Cardiac septum (tissue), 1 donor: ENCODE measurements at regions of chr6 and their contacts with region 1.

Region 1: GRCh38 chr6:25223490-25223991 is 55.6 kb upstream of the CARMIL1 start:
- DNase-seq: no peak

Region 2: GRCh38 chr6:25166955-25167748 is 56.4 kb before region 1 on chr6:
- intact Hi-C with region 1: no loop called
- DNase-seq: no peak

Region 3: GRCh38 chr6:25458485-25458884 is 234.9 kb after region 1 on chr6:
- intact Hi-C with region 1: no loop called
- DNase-seq: no peak

Region 4: GRCh38 chr6:25556516-25556915 is 333.0 kb after region 1 on chr6:
- intact Hi-C with region 1: loop called (anchors 5 kb)
- DNase-seq: peak; percentile 78

Region 5: GRCh38 chr6:25601800-25602673 is 378.5 kb after region 1 on chr6:
- intact Hi-C with region 1: loop called (anchors 5 kb)
- DNase-seq: no peak